HEK293T (cell line): ENCODE measurements at regions of chr17 and their contacts with region 1.

Region 1: DNA sequence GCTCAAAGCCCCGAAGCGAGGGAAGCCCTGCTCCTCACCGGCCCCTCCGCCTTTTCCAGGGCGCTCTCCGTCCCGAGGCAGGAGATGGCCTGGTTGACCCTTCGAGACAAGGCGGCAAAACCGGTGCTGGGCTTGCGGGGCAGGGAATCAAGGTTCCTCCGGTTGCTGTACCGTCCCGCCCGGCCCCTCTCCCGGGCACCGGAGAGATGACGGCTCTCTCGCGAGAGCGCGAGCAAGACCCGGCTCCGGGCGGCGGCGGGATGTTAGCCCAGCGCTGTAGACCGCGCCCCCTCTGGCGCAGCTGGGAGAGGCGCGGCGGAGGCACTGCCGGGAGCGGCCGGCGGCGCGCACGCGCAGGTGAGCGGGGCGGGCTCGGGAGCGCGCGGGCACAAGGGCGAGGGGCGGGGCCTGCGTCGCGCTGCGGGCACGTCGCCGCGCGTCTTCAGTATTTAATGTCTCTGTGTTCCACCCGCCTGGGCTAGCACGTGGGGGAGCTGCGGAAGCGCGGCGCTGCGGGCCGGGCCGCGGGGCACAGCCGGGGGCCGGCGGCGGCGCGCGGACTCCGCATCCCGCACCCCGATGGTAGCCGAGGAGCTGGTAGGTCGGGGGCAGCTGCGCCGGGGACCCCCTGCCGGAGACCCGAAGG is at the start of gene AKAP1:
- DNase-seq: peak; percentile 100

Region 2: DNA sequence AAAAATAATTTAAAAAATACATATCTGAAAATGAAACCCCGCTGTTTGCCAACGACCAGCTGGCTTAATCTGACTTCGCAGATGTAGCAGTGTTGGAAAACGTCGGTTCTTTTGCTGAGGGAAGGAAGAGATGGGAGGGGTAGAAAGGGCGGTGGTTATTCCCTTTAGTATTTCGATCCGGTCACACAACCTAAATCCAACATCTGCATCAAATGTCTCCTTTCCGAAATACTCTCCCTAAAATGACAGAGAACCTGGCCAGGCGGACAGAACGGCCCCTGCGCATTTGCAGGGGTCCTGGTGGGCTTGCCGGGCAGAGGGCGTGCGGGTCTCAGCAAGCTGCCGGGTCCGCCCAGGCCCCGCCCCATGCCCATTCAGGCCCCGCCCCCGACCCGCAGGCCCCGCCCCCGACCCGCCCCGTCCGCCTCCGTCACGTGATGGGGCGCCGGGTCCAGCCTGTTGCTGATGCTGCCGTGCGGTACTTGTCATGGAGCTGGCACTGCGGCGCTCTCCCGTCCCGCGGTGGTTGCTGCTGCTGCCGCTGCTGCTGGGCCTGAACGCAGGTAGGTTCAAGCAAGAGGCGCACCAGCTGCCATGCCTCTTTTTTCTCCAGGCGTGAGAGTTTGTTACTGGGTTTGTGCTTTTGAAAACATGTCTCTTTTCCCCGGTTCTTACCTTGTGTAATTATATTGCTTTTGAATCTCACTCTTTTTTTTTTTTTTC is 107.1 kb before region 1 on chr17 and contains the start of gene SCPEP1:
- CTCF ChIA-PET with region 1: interaction called, 3 read pairs
- POLR2A ChIA-PET with region 1: interaction called, 16 read pairs
- DNase-seq: peak; percentile 100

Region 3: DNA sequence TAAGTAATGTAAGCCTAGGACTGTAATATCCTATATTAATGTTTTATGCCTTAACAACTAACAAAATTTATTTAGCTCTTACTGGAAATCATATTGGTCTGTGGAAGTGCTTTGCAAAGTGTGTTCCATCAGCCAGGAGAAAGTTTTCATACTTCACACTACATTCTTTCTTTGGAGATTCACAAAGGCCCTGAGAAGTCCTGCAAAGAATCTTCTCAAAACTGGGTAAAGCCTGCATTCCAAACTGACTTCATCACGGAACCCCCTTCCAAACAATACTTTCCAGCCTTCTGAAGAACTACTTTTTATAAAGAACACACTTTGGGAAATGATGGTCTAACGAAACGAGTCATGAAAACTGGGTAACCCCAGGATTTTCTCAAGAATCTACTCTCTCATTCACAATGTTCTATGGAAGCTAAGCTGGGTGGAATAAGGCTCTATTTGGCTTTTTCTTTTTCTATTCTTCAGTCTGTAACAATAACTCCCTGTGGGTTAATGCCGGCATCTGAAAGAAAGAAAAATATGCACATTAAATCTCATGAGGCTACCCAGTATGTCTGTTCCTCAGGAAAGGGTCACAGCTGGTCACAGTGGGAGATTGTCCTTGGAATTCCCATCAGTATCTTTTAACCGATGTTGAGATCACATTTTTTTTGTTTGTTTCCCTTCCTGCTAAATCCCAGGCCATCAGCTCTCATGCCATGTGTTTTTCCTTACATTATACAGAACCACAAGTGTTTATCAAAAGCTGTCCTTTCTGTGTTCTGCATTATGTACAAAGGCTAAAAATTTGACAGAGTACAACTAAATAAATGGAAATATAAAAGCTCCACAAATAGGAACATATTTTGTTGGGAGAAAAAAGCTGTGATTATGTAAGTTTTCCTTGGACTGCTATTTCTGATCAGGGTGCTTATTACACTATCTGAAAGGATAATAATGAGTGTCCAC is 12.7 kb before region 1 on chr17:
- CTCF ChIA-PET with region 1: interaction called, 3 read pairs
- POLR2A ChIA-PET with region 1: interaction called, 10 read pairs
- DNase-seq: no peak

Region 4: DNA sequence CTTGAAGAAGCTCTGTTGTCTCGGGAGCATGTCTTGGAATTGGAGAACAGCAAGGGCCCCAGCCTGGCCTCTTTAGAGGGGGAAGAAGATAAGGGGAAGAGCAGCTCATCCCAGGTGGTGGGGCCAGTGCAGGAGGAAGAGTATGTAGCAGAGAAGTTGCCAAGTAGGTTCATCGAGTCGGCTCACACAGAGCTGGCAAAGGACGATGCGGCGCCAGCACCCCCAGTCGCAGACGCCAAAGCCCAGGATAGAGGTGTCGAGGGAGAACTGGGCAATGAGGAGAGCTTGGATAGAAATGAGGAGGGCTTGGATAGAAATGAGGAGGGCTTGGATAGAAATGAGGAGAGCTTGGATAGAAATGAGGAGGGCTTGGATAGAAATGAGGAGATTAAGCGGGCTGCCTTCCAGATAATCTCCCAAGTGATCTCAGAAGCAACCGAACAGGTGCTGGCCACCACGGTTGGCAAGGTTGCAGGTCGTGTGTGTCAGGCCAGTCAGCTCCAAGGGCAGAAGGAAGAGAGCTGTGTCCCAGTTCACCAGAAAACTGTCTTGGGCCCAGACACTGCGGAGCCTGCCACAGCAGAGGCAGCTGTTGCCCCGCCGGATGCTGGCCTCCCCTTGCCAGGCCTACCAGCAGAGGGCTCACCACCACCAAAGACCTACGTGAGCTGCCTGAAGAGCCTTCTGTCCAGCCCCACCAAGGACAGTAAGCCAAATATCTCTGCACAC is 21.3 kb after region 1 on chr17:
- CTCF ChIA-PET with region 1: interaction called, 6 read pairs
- POLR2A ChIA-PET with region 1: interaction called, 21 read pairs
- DNase-seq: peak; percentile 74